Psoas muscle (tissue), 8 donors: ENCODE measurements at regions of chr11 and their contacts with region 1.

Region 1: GRCh38 chr11:35822815-35823495 is 120.9 kb upstream of the LDLRAD3 start:
- DNase-seq: no peak
- ATAC-seq: no peak
- H3K4me3 ChIP-seq: no peak overlapping the region
- H3K27ac ChIP-seq: no peak overlapping the region
- H3K4me1 ChIP-seq: no peaks in the 10 kb centered on the region
- H3K27me3 ChIP-seq: no peaks in the 10 kb centered on the region
- CTCF ChIP-seq: no peak

Region 2: GRCh38 chr11:36023922-36024321 is 201.0 kb after region 1 on chr11:
- intact Hi-C with region 1: loop called in 1 of 2 experiments (anchors 10 kb)
- DNase-seq: no peak
- ATAC-seq: no peak
- H3K4me3 ChIP-seq: no peak overlapping the region
- H3K27ac ChIP-seq: no peak overlapping the region
- H3K4me1 ChIP-seq: peaks cover 16% of the 10 kb centered on the region
- H3K27me3 ChIP-seq: no peaks in the 10 kb centered on the region
- CTCF ChIP-seq: no peak

Region 3: DNA sequence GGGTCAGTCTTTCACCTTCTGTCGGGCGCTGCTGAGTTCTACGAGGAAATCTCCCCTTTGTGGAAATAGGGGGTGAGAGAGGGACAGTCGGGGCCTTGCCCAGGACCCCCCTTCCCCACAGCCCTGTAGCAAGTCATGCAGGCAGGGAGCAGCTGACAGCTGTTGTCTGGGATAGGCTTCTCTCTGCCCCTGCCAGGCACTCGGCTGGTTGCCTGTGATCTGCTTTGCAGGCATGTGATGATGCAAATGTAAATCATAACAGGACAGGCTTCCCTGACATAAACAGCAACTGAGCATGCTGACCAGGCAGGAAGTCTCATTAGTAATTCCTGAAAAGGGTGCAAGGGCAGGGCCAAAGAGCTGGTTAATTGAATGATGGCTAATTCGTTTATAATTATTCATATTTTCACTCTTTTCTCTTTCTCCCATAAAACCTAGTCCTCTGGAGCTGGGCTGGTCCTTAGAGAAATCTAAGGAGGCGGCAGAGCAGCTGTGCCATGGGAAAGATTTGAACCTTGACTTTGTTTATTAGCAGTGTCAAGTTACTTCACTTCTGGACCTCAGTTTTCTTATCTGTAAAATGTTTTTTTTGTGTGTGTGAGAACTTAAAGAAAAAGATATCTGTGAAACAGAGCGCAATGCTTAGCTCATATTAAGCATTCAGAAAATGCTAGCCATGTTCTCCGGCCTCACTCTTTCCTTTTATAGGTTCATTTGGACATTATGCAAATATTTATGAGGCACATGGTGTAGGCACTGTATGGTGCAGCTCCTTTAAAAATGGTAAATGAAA is 250.7 kb after region 1 on chr11:
- intact Hi-C with region 1: loop called in 1 of 2 experiments (anchors 5 kb)
- DNase-seq: peak; percentile 74 to 90
- ATAC-seq: peak; percentile 94 to 98 (median 96)
- H3K4me3 ChIP-seq: peak overlapping the region; percentile 31
- H3K27ac ChIP-seq: peak overlapping the region; percentile 82
- H3K4me1 ChIP-seq: peaks cover 34% of the 10 kb centered on the region
- H3K27me3 ChIP-seq: no peaks in the 10 kb centered on the region
- CTCF ChIP-seq: no peak

Region 4: GRCh38 chr11:36131721-36132397 is 308.9 kb after region 1 on chr11:
- intact Hi-C with region 1: loop called (anchors 5 kb)
- DNase-seq: peak; percentile 52 to 57
- ATAC-seq: peak; percentile 60 to 92 (median 76)
- H3K4me3 ChIP-seq: no peak overlapping the region
- H3K27ac ChIP-seq: no peak overlapping the region
- H3K4me1 ChIP-seq: no peaks in the 10 kb centered on the region
- H3K27me3 ChIP-seq: no peaks in the 10 kb centered on the region
- CTCF ChIP-seq: peak; percentile 69

Region 5: GRCh38 chr11:36258730-36259360 is 435.9 kb after region 1 on chr11:
- intact Hi-C with region 1: loop called (anchors 5 kb)
- DNase-seq: peak; percentile 49 to 69
- ATAC-seq: peak; percentile 86 to 95 (median 88)
- H3K4me3 ChIP-seq: no peak overlapping the region
- H3K27ac ChIP-seq: no peak overlapping the region
- H3K4me1 ChIP-seq: no peaks in the 10 kb centered on the region
- H3K27me3 ChIP-seq: no peaks in the 10 kb centered on the region
- CTCF ChIP-seq: peak; percentile 53

Region 6: DNA sequence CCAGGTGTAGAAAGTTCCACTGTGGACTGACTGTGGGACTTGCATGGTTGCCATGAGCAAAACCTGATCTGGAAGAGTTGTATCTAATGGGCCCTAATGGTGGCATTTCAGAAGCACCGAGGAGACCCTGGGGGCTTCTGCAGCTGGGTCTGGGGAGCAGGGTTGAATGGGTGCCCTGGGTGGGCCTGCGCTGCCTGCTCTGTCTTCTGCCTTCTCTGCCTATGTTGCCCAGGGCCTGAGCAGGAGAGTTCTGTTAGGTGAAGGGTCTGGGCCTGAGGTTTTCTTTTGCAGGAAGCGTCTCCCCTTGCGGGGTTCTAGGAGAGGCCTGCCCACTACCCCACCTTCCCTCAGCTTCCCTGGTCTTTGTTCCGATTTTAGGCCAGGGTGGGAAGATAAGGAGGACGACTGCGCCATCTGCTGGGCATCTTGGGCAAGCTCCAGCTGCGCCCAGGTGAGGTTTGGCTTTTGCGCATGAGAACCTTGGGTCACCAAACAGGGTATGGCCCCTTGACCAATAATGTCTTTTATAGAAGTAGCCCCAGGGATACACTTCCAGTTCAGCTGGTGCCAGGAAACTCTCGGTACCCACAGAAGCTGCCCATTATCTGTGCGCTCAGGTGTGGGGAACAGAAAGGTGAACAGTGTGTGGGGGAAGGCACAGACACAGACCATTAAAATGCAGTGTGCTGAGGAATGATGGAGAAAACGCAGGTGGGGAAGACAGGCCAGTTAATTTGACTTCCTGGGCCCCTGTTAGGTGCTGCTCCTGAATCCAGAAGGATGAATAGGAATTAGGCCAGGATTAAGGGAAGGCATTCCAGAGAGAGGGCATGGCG is 443.1 kb after region 1 on chr11:
- intact Hi-C with region 1: loop called in 1 of 2 experiments (anchors 5 kb)
- DNase-seq: peak; percentile 42 to 74
- ATAC-seq: peak; percentile 56 to 89 (median 77)
- H3K4me3 ChIP-seq: no peak overlapping the region
- H3K27ac ChIP-seq: no peak overlapping the region
- H3K4me1 ChIP-seq: no peaks in the 10 kb centered on the region
- H3K27me3 ChIP-seq: no peaks in the 10 kb centered on the region
- CTCF ChIP-seq: peak; percentile 79